Left cardiac atrium (tissue), 4 donors: ENCODE measurements at regions of chr6 and their contacts with region 1.

Region 1: GRCh38 chr6:35146453-35146852 is 5.3 kb upstream of the TCP11 start:
- DNase-seq: no peak
- ATAC-seq: peak; percentile 54 to 94

Region 2: DNA sequence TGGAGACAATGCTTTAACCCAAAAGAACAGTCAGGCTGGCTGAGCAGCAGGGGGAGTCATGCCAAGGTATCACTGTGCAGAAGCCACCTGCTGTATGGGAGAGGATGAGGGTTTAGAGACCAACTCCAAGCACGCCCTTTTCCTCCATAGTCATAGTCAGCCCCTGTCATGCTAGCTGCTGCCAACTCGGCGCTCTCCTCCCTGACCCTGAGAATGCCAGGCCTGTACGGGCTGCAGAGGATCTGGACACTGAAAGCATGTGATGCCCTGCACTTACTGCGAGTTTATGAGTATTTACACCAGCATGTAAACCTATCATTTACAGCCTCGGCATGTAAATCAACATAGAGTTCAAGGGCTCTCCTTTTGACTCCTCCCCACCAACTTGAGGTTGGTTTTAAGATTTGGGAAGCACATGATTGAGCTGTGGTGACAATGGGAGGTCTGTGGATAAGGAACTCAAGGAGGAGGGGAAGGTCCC is 55.7 kb after region 1 on chr6:
- intact Hi-C with region 1: loop called (anchors 2 to 10 kb)
- DNase-seq: no peak
- ATAC-seq: peak; percentile 47 to 58

Region 3: GRCh38 chr6:35240840-35241801 is 94.7 kb after region 1 on chr6:
- intact Hi-C with region 1: loop called (anchors 1 to 10 kb)
- DNase-seq: peak; percentile 68
- ATAC-seq: peak; percentile 43 to 65